PC-3 (cell line): ENCODE measurements at regions of chr16 and their contacts with region 1.

Region 1: GRCh38 chr16:31142109-31143010 is 6.8 kb upstream of the PRSS8 start:
- DNase-seq: peak; percentile 96
- ATAC-seq: peak; percentile 78
- H3K4me3 ChIP-seq: peak overlapping the region; percentile 58
- H3K27ac ChIP-seq: peak overlapping the region; percentile 70
- H3K4me1 ChIP-seq: peaks cover 21% of the 10 kb centered on the region
- H3K27me3 ChIP-seq: no peaks in the 10 kb centered on the region
- CTCF ChIP-seq: peak; percentile 77

Region 2: GRCh38 chr16:31022544-31023251 is 119.7 kb before region 1 on chr16:
- CTCF ChIA-PET with region 1: no interaction called
- POLR2A ChIA-PET with region 1: no interaction called
- intact Hi-C with region 1: loop called (anchors 10 kb)
- DNase-seq: no peak
- ATAC-seq: no peak
- H3K4me3 ChIP-seq: no peak overlapping the region
- H3K27ac ChIP-seq: no peak overlapping the region
- H3K4me1 ChIP-seq: no peaks in the 10 kb centered on the region
- H3K27me3 ChIP-seq: no peaks in the 10 kb centered on the region
- CTCF ChIP-seq: no peak

Region 3: DNA sequence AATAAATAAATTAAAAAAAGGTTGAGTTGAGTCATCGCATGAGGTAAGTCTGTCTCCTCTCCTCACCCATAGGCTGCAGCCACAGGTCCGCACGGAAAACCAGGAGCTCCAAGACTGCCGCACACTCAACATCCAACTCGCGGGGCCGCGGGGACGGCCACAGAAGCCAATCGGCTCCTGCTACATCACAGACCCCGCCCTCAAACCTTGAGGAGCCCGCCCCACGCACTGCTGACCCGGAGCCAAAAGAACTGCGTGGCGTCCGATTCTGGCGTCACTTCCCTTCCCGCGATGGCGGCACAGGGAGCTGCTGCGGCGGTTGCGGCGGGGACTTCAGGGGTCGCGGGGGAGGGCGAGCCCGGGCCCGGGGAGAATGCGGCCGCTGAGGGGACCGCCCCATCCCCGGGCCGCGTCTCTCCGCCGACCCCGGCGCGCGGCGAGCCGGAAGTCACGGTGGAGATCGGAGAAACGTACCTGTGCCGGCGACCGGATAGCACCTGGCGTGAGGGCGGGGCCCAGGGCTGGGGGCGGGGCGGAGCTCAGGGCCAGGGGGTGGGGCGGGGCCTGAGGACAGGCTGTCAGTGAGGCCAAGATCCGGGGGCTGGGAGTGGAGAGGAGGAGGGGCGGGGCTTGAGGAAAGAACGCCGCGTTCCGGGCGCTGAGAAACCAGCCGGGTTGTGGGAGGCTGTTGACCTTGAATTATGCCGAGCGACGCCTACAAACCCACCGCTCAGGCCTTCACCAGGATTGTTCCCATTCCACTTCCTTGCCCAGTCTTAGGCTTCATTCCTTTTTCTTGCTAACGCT is 24.8 kb before region 1 on chr16 and contains the start of gene KAT8:
- CTCF ChIA-PET with region 1: interaction called, 26 read pairs
- POLR2A ChIA-PET with region 1: interaction called, 11 read pairs
- intact Hi-C with region 1: loop called (anchors 2 kb)
- DNase-seq: peak; percentile 96
- ATAC-seq: peak; percentile 95
- H3K4me3 ChIP-seq: peak within 1 kb of the TSS; percentile 92
- H3K27ac ChIP-seq: peak within 1 kb of the TSS; percentile 74
- H3K4me1 ChIP-seq: peaks cover 15% of the 10 kb centered on the region
- H3K27me3 ChIP-seq: no peaks in the 10 kb centered on the region
- CTCF ChIP-seq: no peak
- total RNA-seq, gene KAT8: 25.3 and 35.1 TPM in 2 replicates

Region 4: DNA sequence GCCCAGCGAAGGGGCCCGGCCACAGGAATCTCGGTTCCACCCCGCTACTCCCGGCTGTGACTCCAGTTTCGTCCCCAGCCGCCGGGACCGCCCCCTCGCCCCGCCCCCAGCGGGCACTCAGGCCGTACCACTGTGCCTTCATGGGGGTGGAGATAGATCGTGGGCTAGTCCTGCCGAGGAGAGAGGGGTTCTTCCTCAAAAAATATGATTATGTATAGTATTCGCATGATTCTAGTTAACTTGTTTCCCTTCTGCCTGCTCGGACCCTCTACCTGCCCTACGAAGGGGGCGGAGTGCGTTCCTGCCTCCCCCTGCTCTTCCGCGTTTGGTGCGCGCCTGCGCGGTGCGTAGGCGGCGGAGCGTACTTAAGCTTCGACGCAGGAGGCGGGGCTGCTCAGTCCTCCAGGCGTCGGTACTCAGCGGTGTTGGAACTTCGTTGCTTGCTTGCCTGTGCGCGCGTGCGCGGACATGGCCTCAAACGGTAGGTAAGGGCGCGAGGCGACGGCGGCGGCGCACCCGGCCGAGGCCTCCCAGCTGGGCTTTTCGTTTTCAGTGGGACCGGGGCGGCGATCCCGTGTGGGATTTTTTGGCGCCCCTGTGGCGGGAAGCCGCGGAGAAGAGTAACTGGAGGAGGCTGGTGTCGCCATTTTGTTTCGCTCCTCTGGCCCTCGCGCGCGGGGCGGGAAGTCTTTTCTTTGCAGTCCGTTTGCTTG is 37.5 kb after region 1 on chr16 and contains the start of gene FUS:
- CTCF ChIA-PET with region 1: interaction called, 3 read pairs
- POLR2A ChIA-PET with region 1: interaction called, 11 read pairs
- intact Hi-C with region 1: no loop called
- DNase-seq: peak; percentile 78
- ATAC-seq: peak; percentile 66
- H3K4me3 ChIP-seq: peak within 1 kb of the TSS; percentile 98
- H3K27ac ChIP-seq: peak within 1 kb of the TSS; percentile 59
- H3K4me1 ChIP-seq: peaks cover 12% of the 10 kb centered on the region; the same call in 1 of the 2 replicates
- H3K27me3 ChIP-seq: no peaks in the 10 kb centered on the region
- CTCF ChIP-seq: no peak
- total RNA-seq, gene FUS: 43.0 and 90.7 TPM in 2 replicates

Region 5: DNA sequence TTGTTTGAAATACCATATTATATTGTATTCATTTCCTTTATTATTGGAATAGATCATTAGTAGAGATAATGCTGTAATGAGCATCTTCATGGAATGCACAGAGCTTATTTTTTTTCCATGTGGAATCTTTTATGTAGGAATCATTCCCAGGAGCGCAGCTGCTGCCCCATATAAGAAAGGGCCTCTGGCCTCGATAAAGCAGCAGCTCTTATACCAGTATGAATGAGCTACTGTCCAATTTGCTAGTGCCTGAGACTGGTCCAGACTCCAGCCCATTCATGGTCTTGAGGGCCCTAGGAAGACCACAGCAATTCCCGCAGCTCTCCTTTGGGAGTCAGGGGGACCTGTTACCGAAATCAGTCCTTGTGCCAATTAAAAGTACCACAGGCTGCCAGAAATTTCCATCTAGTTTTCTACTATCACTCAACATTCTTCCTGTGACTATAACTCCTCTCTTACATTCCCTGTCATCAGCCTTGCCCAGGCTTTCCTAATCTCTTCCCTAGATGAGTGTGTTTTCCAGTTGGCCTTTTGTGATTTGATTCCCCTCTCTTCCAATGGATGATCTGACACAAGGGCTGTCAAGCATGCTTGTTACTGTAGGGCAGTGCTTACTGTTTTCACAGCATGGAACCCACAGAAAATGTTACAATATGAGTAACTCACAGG is 298.3 kb after region 1 on chr16:
- CTCF ChIA-PET with region 1: no interaction called
- POLR2A ChIA-PET with region 1: no interaction called
- intact Hi-C with region 1: loop called (anchors 5 kb)
- DNase-seq: no peak
- ATAC-seq: no peak
- H3K4me3 ChIP-seq: no peak overlapping the region
- H3K27ac ChIP-seq: no peak overlapping the region
- H3K4me1 ChIP-seq: no peaks in the 10 kb centered on the region
- H3K27me3 ChIP-seq: no peaks in the 10 kb centered on the region
- CTCF ChIP-seq: no peak